CD4-positive, alpha-beta T cell (primary cell): ENCODE measurements at regions of chr17 and their contacts with region 1.

Region 1: GRCh38 chr17:40647624-40648383 is at the start of gene SMARCE1:
- DNase-seq: peak; percentile 52 to 87 (median 67)
- ATAC-seq: peak; percentile 66
- H3K4me3 ChIP-seq: peak within 1 kb of the TSS; percentile 89
- H3K4me3 Mint-ChIP-seq: peak within 1 kb of the TSS; percentile 93
- H3K27ac ChIP-seq: peak within 1 kb of the TSS; percentile 95 to 98
- H3K27ac Mint-ChIP-seq: peak within 1 kb of the TSS; percentile 97
- H3K4me1 ChIP-seq: peaks cover 19% of the 10 kb centered on the region
- H3K4me1 Mint-ChIP-seq: peaks cover 51% of the 10 kb centered on the region
- H3K27me3 ChIP-seq: no peaks in the 10 kb centered on the region
- H3K27me3 Mint-ChIP-seq: no peaks in the 10 kb centered on the region
- CTCF ChIP-seq: no peak
- total RNA-seq, gene SMARCE1: 65.4 to 68.6 TPM

Region 2: DNA sequence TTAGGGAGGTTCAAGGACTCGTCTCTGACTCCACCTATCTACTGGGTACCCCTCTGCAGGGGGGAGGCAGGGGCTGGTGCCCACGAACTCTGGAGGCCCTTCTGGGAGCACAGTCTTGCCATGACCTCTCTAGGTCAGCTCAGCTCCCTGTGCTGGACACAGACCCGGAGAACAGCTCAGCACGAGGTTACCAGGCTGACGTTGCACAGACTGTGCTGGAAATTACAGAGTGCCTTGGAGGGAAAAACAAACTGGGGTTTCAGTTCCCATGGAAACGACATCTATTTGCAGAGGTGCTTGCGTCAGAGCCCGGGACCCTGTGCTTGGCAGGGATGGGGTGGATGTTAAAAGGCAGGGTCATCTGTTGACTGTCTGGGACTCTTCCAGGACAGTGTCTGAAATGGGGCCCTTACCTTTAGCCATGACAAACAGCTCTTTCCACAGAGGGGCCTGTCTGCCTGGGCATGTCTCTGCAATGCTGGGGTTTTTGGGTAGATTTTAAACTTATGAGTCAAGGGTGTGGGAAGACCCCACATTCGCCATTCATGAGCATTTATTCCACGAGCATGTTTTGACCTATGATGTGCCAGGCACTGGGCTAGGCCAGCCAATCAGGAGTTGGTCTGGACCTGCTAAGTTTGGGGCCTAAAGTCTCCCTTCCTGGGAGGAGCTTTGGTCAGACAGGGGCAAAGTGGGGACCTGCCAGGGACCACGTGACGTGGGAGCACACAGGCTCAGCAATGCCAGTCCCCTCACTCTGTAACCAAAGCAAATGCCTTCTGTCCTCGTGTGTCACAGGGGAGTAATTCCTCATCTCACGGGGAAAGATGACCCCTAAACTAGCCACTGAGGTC is 105.0 kb before region 1 on chr17:
- CTCF ChIA-PET with region 1: no interaction called
- POLR2A ChIA-PET with region 1: interaction called, 11 read pairs
- intact Hi-C with region 1: no loop called
- DNase-seq: peak in 5 of 14 experiments; percentile 32 to 80 (median 45)
- ATAC-seq: no peak
- H3K4me3 ChIP-seq: no peak overlapping the region
- H3K4me3 Mint-ChIP-seq: peak overlapping the region; percentile 72
- H3K27ac ChIP-seq: peak overlapping the region in 1 of 2 donors; percentile 79
- H3K27ac Mint-ChIP-seq: peak overlapping the region; percentile 94
- H3K4me1 ChIP-seq: peaks cover 94% of the 10 kb centered on the region
- H3K4me1 Mint-ChIP-seq: peaks cover 83% of the 10 kb centered on the region
- H3K27me3 ChIP-seq: no peaks in the 10 kb centered on the region
- H3K27me3 Mint-ChIP-seq: no peaks in the 10 kb centered on the region
- CTCF ChIP-seq: no peak

Region 3: GRCh38 chr17:40551879-40552768 is 95.7 kb before region 1 on chr17:
- CTCF ChIA-PET with region 1: no interaction called
- POLR2A ChIA-PET with region 1: interaction called, 20 read pairs
- intact Hi-C with region 1: no loop called
- DNase-seq: peak in 6 of 14 experiments; percentile 39 to 76 (median 44)
- ATAC-seq: no peak
- H3K4me3 ChIP-seq: no peak overlapping the region
- H3K4me3 Mint-ChIP-seq: peak overlapping the region; percentile 55
- H3K27ac ChIP-seq: peak overlapping the region in 1 of 2 donors; percentile 100
- H3K27ac Mint-ChIP-seq: peak overlapping the region; percentile 92
- H3K4me1 ChIP-seq: peaks cover 99% of the 10 kb centered on the region
- H3K4me1 Mint-ChIP-seq: peaks cover 99% of the 10 kb centered on the region
- H3K27me3 ChIP-seq: no peaks in the 10 kb centered on the region
- H3K27me3 Mint-ChIP-seq: no peaks in the 10 kb centered on the region
- CTCF ChIP-seq: no peak

Region 4: GRCh38 chr17:40582328-40582901 is 65.4 kb before region 1 on chr17:
- CTCF ChIA-PET with region 1: no interaction called
- POLR2A ChIA-PET with region 1: interaction called, 10 read pairs
- intact Hi-C with region 1: no loop called
- DNase-seq: peak; percentile 61 to 90 (median 82)
- ATAC-seq: peak; percentile 92
- H3K4me3 ChIP-seq: peak overlapping the region; percentile 21
- H3K4me3 Mint-ChIP-seq: peak overlapping the region; percentile 59
- H3K27ac ChIP-seq: peak overlapping the region; percentile 70 to 82
- H3K27ac Mint-ChIP-seq: peak overlapping the region; percentile 97
- H3K4me1 ChIP-seq: peaks cover 50% of the 10 kb centered on the region
- H3K4me1 Mint-ChIP-seq: peaks cover 93% of the 10 kb centered on the region
- H3K27me3 ChIP-seq: no peaks in the 10 kb centered on the region
- H3K27me3 Mint-ChIP-seq: no peaks in the 10 kb centered on the region
- CTCF ChIP-seq: no peak

Region 5: GRCh38 chr17:40622509-40622928 is 25.3 kb before region 1 on chr17:
- CTCF ChIA-PET with region 1: interaction called, 8 read pairs
- POLR2A ChIA-PET with region 1: interaction called, 10 read pairs
- intact Hi-C with region 1: loop called (anchors 2 kb)
- DNase-seq: peak in 3 of 14 experiments; percentile 56 to 71 (median 69)
- ATAC-seq: peak; percentile 65
- H3K4me3 ChIP-seq: no peak overlapping the region
- H3K4me3 Mint-ChIP-seq: peak overlapping the region; percentile 71
- H3K27ac ChIP-seq: peak overlapping the region in 1 of 2 donors; percentile 31
- H3K27ac Mint-ChIP-seq: peak overlapping the region; percentile 70
- H3K4me1 ChIP-seq: peaks cover 29% of the 10 kb centered on the region
- H3K4me1 Mint-ChIP-seq: peaks cover 54% of the 10 kb centered on the region
- H3K27me3 ChIP-seq: no peaks in the 10 kb centered on the region
- H3K27me3 Mint-ChIP-seq: no peaks in the 10 kb centered on the region
- CTCF ChIP-seq: no peak

Region 6: DNA sequence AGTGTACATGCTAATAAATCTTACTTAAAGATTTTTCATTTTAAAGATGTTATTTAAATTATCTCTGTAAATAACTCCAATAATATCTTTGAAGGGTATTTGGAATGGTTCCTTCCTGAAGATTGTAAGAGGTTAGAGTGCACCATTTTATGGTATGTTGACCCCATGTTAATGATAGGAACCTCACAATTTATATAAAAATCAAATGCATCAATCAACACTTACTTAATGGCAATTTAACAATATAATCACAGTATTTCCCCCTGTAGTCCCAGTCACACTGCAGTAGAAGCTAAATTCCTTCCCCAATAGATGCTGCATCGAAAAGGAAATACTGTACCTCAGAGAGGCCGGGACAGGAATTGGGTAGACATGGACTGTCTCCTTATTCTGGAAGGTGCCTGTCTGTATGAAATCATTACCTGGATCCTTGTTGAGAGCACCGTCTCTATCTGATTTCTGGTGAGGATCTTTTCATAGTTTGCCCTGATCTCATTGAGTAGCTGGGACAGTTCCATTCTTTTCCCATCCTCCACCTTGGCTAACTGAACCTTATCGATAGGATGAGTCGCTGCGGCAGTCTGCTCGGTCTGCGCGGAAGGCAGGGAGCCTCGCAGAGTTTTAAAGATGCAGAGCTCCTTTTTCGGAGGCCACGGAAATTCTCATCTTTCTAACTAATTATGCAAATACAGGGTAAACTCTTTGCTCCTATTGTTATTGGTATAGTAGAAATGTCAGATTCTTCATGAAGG is 17.0 kb after region 1 on chr17 and contains the start of gene KRT222:
- CTCF ChIA-PET with region 1: interaction called, 4 read pairs
- POLR2A ChIA-PET with region 1: interaction called, 14 read pairs
- intact Hi-C with region 1: no loop called
- DNase-seq: peak in 1 of 14 experiments; percentile 3
- ATAC-seq: no peak
- H3K4me3 ChIP-seq: no peak within 1 kb of the TSS
- H3K4me3 Mint-ChIP-seq: no peak within 1 kb of the TSS
- H3K27ac ChIP-seq: no peak within 1 kb of the TSS
- H3K27ac Mint-ChIP-seq: no peak within 1 kb of the TSS
- H3K4me1 ChIP-seq: peaks cover 5% of the 10 kb centered on the region
- H3K4me1 Mint-ChIP-seq: peaks cover 11% of the 10 kb centered on the region
- H3K27me3 ChIP-seq: peaks cover 7 to 20% of the 10 kb centered on the region in 2 experiments
- H3K27me3 Mint-ChIP-seq: peaks cover 41% of the 10 kb centered on the region
- CTCF ChIP-seq: no peak
- total RNA-seq, gene KRT222: not detected

Region 7: GRCh38 chr17:40818733-40819527 is 171.1 kb after region 1 on chr17:
- CTCF ChIA-PET with region 1: no interaction called
- POLR2A ChIA-PET with region 1: interaction called, 16 read pairs
- intact Hi-C with region 1: no loop called
- DNase-seq: peak; percentile 68 to 96 (median 80)
- ATAC-seq: peak; percentile 83
- H3K4me3 ChIP-seq: peak overlapping the region; percentile 75
- H3K4me3 Mint-ChIP-seq: peak overlapping the region; percentile 96
- H3K27ac ChIP-seq: peak overlapping the region; percentile 62 to 74
- H3K27ac Mint-ChIP-seq: peak overlapping the region; percentile 89
- H3K4me1 ChIP-seq: peaks cover 5% of the 10 kb centered on the region
- H3K4me1 Mint-ChIP-seq: peaks cover 33% of the 10 kb centered on the region
- H3K27me3 ChIP-seq: peaks cover 0 to 1% of the 10 kb centered on the region in 2 experiments
- H3K27me3 Mint-ChIP-seq: peaks cover 15% of the 10 kb centered on the region
- CTCF ChIP-seq: no peak